Cardiac septum (tissue), 1 donor: ENCODE measurements at regions of chr10 and their contacts with region 1.

Region 1: GRCh38 chr10:87659571-87660483 is at the start of gene PAPSS2:
- DNase-seq: peak; percentile 83
- total RNA-seq, gene PAPSS2: 4.6 TPM

Region 2: DNA sequence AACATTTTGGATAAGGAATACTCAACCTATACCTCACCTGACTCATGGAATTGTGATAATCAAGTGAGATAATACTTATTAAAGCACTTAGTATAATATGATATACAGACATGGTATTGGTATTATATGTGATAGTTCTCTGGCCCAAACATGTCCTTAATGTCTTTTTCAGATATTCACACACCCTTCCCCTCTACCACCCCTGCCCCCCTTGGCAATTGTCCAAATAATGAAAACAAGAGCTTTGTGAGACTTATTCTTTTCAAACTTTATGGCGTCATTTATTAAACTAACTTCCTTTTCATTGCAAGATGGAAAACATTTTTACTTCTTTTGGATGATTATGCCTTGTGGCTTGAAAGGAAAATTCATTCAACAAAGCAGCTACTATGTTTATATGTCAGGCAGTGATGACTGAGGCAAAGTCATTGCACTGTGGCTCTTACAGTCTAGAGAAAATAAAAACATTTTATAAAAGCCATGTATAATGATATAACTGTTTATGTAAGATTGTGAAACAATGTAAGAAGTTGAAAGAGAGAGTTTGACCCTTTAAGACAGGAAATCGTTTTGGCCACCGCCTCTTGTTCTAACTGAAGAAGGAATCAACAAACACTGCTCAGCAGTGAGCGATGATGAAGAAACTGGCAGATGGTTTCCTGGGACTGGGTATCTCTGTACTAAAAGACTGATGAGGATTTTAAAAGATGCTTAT is 127.8 kb before region 1 on chr10:
- intact Hi-C with region 1: loop called (anchors 10 kb)
- DNase-seq: no peak

Region 3: DNA sequence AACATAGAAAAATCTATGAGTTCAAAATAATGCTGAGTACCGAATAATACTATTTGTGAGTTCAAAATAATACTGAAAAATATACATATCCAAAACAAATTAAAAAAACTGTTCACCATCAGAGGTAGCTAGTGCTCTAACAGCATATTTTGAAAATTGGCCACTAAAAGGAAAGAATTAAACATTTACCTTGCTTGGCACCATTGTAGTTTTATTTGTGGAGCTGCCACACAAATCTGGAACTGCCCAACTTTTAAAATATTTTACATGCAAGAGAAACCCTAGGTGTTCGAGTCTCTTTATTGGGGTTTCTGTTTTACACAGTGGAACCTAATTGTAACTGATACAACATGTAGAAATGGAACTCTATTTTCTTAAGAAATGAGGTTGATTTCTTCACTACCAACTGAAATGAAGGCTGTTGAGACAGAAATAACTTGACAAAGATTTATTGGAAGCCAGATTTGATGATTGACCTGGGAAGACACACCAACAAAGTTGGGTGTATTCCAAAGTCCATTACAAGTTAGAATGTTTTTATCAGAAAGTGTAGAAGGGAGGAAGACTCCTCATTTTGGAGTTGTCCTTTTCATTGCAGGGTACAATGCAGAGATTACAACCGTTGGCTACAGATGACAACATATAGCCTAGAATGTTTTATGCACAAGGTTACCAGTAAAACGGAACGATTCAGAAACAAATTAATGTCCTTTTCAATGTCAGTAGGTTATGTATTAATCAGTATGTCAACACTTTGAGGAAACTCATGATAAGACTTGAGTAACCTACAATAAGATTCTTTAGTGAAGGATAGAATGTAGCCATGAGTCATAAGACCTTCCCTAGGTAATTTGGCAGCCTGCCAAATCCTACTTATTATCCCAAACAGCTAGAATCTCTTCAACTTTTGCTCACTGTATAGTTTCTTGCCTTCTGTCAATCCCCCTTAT is 74.0 kb before region 1 on chr10:
- intact Hi-C with region 1: no loop called
- DNase-seq: no peak

Region 4: DNA sequence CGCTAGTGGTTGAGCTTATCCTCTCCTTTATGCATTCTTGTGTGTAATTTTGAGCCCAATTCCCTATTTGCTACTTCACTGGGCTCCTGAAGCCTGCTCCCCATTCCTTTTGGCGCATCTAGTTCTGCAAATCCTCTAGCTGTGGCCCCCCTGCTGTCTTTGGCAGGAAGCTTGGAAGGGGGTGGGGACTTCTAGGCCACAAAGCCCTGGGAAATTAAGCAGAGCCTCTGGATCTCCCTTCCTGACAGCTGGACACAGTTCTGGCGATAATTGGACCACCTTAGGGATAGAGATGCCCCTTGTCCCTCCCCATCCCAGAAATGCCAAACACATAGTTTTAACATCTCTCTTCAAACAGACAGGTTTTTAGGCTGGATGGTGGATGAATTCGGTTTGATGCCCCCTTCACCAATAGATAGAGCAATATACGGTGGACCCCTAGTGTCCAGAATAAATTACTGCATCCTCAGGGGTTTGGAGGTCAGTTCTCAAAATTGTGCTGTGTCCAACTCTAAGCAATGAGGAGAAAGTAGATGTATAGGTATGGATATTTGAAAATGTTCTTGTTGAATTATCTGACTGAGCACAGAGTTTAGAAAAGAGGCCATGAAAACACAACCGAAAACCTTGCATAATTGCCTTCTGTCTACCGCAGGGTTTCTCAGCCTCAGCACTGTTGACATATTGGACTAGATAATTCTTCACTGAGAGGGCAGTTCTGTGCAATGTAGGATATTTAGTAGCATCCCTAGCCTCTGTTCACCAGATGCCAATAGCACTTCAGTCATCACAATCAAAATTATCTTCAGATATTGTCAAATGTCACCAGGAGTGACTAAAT is 75.4 kb after region 1 on chr10:
- intact Hi-C with region 1: loop called (anchors 1 kb)
- DNase-seq: no peak

Region 5: GRCh38 chr10:87771871-87772500 is 112.2 kb after region 1 on chr10:
- intact Hi-C with region 1: loop called (anchors 2 kb)
- DNase-seq: no peak